ENCODE measurements at regions of chr18 and their contacts with region 1.

Region 1: GRCh38 chr18:59918320-59918755 is 18.5 kb downstream of the PMAIP1 start:
- DNase-seq: no peak
- H3K4me3 Mint-ChIP-seq: no peak overlapping the region
- H3K27ac Mint-ChIP-seq: peak overlapping the region; percentile 35
- H3K4me1 Mint-ChIP-seq: peaks cover 35% of the 10 kb centered on the region
- H3K27me3 Mint-ChIP-seq: no peaks in the 10 kb centered on the region

Region 2: GRCh38 chr18:59810183-59810582 is 108.2 kb before region 1 on chr18:
- intact Hi-C with region 1: no loop called
- DNase-seq: no peak
- H3K4me3 Mint-ChIP-seq: no peak overlapping the region
- H3K27ac Mint-ChIP-seq: no peak overlapping the region
- H3K4me1 Mint-ChIP-seq: peaks cover 2% of the 10 kb centered on the region
- H3K27me3 Mint-ChIP-seq: peaks cover 35% of the 10 kb centered on the region

Region 3: DNA sequence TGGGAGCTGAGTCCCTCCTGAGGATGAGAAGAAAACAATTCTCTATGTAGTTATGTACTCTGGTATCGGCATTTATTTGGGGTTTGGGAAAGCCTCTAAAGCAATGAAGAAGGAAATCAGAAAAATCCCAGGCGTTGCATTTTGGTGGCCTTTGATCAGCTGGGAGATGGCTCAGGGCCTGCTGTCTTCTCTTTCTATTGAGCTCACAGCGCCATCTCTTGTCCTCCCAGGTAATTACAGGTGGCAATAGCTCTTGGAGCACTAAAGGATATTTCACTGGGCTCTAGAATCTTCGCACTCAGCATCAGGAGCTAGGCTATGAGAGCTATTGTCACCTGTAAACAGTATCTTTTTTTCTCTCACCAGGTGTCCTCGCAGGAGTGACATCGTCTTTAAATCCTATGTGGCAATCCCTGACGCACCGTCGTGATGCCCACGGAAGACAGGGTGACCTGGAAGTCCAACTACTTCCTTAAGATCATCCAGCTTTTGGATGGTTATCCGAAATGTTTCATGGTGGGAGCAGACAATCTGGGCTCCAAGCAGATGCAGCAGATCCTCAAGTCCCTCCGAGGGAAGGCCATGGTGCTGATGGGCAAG is 94.6 kb before region 1 on chr18:
- intact Hi-C with region 1: no loop called
- DNase-seq: peak; percentile 24
- H3K4me3 Mint-ChIP-seq: no peak overlapping the region
- H3K27ac Mint-ChIP-seq: no peak overlapping the region
- H3K4me1 Mint-ChIP-seq: no peaks in the 10 kb centered on the region
- H3K27me3 Mint-ChIP-seq: peaks cover 14% of the 10 kb centered on the region

Region 4: DNA sequence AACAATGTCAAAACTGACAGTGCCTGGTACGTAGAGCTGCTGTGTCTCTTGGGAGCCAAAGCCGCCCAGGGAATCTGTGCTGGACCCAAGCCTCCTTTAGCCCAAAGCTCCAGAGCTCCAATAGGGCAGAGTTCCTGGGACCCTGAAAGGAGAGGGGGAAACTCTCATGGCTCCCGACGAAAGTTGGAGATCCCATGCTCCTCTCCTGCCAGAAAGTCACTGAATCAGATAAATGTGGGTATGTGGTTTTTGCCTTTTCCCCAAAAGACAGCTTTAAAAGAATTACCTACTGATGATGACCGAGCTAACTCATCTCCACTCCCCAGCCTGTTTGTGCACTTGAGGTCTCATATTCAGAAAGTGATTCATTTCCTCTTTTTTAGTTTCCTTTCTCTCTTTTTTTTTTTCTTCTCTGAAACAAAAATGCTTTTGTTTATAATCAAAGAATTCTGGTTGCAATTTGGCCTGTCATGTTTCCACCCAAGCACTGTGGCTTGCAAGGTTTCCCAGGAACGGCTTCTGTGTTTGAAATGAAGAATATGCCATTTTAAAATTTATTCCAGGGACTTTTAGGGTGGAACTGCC is 32.7 kb before region 1 on chr18:
- intact Hi-C with region 1: loop called (anchors 5 kb)
- DNase-seq: peak; percentile 33
- H3K4me3 Mint-ChIP-seq: peak overlapping the region; percentile 21
- H3K27ac Mint-ChIP-seq: peak overlapping the region; percentile 11
- H3K4me1 Mint-ChIP-seq: peaks cover 44% of the 10 kb centered on the region
- H3K27me3 Mint-ChIP-seq: no peaks in the 10 kb centered on the region